ENCODE measurements at regions of chr15 and their contacts with region 1.

Region 1: GRCh38 chr15:57706405-57707209 is at the start of gene POLR2M:
- DNase-seq: peak; percentile 91
- ATAC-seq: peak; percentile 99
- H3K4me3 ChIP-seq: peak within 1 kb of the TSS; percentile 94 to 98
- H3K27ac ChIP-seq: peak within 1 kb of the TSS; percentile 89
- H3K4me1 ChIP-seq: peaks cover 13% of the 10 kb centered on the region
- H3K27me3 ChIP-seq: no peaks in the 10 kb centered on the region
- CTCF ChIP-seq: no peak
- total RNA-seq, gene POLR2M: 76.6 TPM

Region 2: DNA sequence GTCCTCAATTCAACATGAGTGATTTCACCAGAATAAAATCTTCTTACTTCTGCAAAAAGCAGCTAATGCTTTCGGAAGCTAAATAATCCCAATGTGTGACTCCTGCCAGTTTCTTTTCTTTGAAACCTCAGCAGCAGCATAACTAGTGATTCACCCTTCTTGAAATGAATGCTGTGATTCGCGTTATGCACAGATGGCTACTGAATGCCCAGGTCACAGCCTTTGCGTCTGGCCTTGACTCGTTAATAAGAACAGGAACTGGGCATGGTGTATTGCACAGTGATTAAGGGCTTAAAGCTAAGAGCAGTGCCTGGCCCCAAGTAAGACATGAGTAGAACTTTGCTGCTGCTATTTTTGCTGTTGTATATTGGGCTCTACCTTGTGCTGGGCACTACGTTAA is 311.3 kb before region 1 on chr15:
- CTCF ChIA-PET with region 1: no interaction called
- POLR2A ChIA-PET with region 1: interaction called, 13 read pairs
- in situ Hi-C with region 1: no loop called
- intact Hi-C with region 1: no loop called
- DNase-seq: no peak
- ATAC-seq: no peak
- H3K4me3 ChIP-seq: no peak overlapping the region
- H3K27ac ChIP-seq: no peak overlapping the region
- H3K4me1 ChIP-seq: no peaks in the 10 kb centered on the region
- H3K27me3 ChIP-seq: no peaks in the 10 kb centered on the region; the same call in 1 of the 2 replicates
- CTCF ChIP-seq: no peak

Region 3: GRCh38 chr15:57406062-57406772 is 300.4 kb before region 1 on chr15:
- CTCF ChIA-PET with region 1: no interaction called
- POLR2A ChIA-PET with region 1: no interaction called
- in situ Hi-C with region 1: no loop called
- intact Hi-C with region 1: no loop called
- DNase-seq: no peak
- ATAC-seq: no peak
- H3K4me3 ChIP-seq: no peak overlapping the region
- H3K27ac ChIP-seq: no peak overlapping the region
- H3K4me1 ChIP-seq: no peaks in the 10 kb centered on the region
- H3K27me3 ChIP-seq: no peaks in the 10 kb centered on the region
- CTCF ChIP-seq: no peak